Activated CD4-positive, alpha-beta T cell treated with anti-CD3 and anti-CD28 coated beads, Interleukin-2, amount 10 ng/mL, durations not matched to agents 24 days and 14 days (primary cell): ENCODE measurements at regions of chr3 and their contacts with region 1.

Region 1: GRCh38 chr3:32296256-32297204 is 58.0 kb downstream of the CMTM8 start:
- DNase-seq: peak; percentile 89
- H3K4me3 Mint-ChIP-seq: peak overlapping the region; percentile 16
- H3K27ac Mint-ChIP-seq: peak overlapping the region; percentile 90
- H3K4me1 Mint-ChIP-seq: peaks cover 34% of the 10 kb centered on the region
- H3K27me3 Mint-ChIP-seq: no peaks in the 10 kb centered on the region

Region 2: GRCh38 chr3:31999907-32000439 is 296.6 kb before region 1 on chr3:
- intact Hi-C with region 1: no loop called
- DNase-seq: no peak
- H3K4me3 Mint-ChIP-seq: no peak overlapping the region
- H3K27ac Mint-ChIP-seq: no peak overlapping the region
- H3K4me1 Mint-ChIP-seq: peaks cover 10% of the 10 kb centered on the region
- H3K27me3 Mint-ChIP-seq: peaks cover 8% of the 10 kb centered on the region

Region 3: GRCh38 chr3:32238453-32239306 is 57.9 kb before region 1 on chr3 and contains the start of gene CMTM8:
- intact Hi-C with region 1: loop called (anchors 5 kb)
- DNase-seq: peak; percentile 90
- H3K4me3 Mint-ChIP-seq: peak within 1 kb of the TSS; percentile 86
- H3K27ac Mint-ChIP-seq: peak within 1 kb of the TSS; percentile 75
- H3K4me1 Mint-ChIP-seq: peaks cover 19% of the 10 kb centered on the region
- H3K27me3 Mint-ChIP-seq: peaks cover 32% of the 10 kb centered on the region
- total RNA-seq, gene CMTM8: 4.8 and 5.5 TPM in 2 replicates

Region 4: DNA sequence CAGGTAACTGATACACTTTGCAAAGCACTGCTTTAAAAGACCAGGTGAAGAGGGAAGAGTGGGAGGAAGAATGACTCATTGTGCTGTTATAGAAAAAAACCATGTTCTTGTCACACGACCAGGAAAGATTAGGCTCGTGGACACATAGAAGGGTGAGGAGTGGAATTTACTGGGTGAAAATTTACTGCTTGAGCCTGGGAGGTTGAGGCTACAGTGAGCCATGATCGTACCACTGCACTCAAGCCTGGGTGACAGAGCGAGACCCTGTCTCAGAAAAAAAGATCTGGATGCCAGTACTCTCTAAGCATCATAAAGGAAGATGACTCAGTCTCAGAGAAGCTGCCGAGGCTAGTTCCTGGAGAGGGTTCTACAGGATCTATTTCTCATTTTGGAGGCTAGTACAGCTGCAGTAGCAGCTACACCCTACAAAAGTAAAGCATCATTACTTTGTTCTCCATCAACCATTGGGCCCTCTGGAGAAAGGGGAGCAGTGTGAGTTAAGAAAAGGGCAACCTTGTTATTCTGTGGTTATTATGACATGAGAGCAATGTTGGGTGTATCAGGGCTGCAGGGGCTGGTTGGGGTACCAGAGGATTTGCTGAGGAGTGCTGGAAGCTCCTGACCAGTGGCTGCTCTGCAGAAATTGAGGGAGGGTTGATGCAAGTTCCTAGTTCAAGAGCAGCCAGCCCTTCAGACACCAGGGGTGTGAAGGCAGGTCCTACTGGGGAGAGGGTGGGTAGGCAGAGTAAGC is 17.4 kb after region 1 on chr3:
- intact Hi-C with region 1: loop called (anchors 1 kb)
- DNase-seq: peak; percentile 76
- H3K4me3 Mint-ChIP-seq: peak overlapping the region; percentile 52
- H3K27ac Mint-ChIP-seq: peak overlapping the region; percentile 73
- H3K4me1 Mint-ChIP-seq: peaks cover 35% of the 10 kb centered on the region
- H3K27me3 Mint-ChIP-seq: no peaks in the 10 kb centered on the region

Region 5: GRCh38 chr3:32334675-32335074 is 38.1 kb after region 1 on chr3:
- intact Hi-C with region 1: loop called (anchors 1 kb)
- DNase-seq: peak; percentile 89
- H3K4me3 Mint-ChIP-seq: peak overlapping the region; percentile 57
- H3K27ac Mint-ChIP-seq: peak overlapping the region; percentile 31
- H3K4me1 Mint-ChIP-seq: peaks cover 42% of the 10 kb centered on the region
- H3K27me3 Mint-ChIP-seq: no peaks in the 10 kb centered on the region

Region 6: DNA sequence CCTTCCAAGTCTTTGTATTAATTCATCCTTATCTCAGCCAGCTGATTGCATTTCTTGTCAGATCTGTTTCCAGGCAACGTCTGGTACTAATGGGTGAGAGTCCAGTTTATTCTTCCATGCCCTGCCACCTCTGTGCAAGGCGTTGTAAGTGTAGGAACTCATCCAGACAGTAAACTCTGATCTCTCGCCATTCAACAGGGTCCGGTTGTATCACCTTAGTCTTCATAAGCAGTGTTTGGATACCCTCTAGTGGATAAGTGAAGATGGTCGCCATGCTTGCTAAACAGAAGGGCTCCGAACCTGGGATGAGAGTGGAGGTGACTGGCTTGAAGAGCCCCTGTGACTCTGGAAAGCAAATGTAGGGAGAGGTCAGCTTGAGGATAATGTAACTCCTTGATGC is 43.5 kb after region 1 on chr3:
- intact Hi-C with region 1: loop called (anchors 1 kb)
- DNase-seq: peak; percentile 81
- H3K4me3 Mint-ChIP-seq: no peak overlapping the region
- H3K27ac Mint-ChIP-seq: no peak overlapping the region
- H3K4me1 Mint-ChIP-seq: peaks cover 21% of the 10 kb centered on the region
- H3K27me3 Mint-ChIP-seq: no peaks in the 10 kb centered on the region

Region 7: GRCh38 chr3:32401556-32402081 is 105.1 kb after region 1 on chr3:
- intact Hi-C with region 1: loop called (anchors 1 kb)
- DNase-seq: peak; percentile 90
- H3K4me3 Mint-ChIP-seq: peak overlapping the region; percentile 92
- H3K27ac Mint-ChIP-seq: peak overlapping the region; percentile 99
- H3K4me1 Mint-ChIP-seq: peaks cover 59% of the 10 kb centered on the region
- H3K27me3 Mint-ChIP-seq: no peaks in the 10 kb centered on the region

Region 8: GRCh38 chr3:32467333-32468070 is 171.0 kb after region 1 on chr3:
- intact Hi-C with region 1: loop called (anchors 5 kb)
- DNase-seq: peak; percentile 94
- H3K4me3 Mint-ChIP-seq: no peak overlapping the region
- H3K27ac Mint-ChIP-seq: no peak overlapping the region
- H3K4me1 Mint-ChIP-seq: peaks cover 28% of the 10 kb centered on the region
- H3K27me3 Mint-ChIP-seq: no peaks in the 10 kb centered on the region